Common myeloid progenitor, CD34-positive (primary cell): ENCODE measurements at regions of chr16 and their contacts with region 1.

Region 1: GRCh38 chr16:68022704-68023522 is at the starts of genes DDX28 and DUS2:
- DNase-seq: peak; percentile 94 to 97 (median 97)
- H3K4me3 ChIP-seq: peak within 1 kb of the TSS; percentile 93 to 98 (median 95)
- H3K27ac ChIP-seq: peak within 1 kb of the TSS; percentile 82 to 92
- H3K4me1 ChIP-seq: peaks cover 7 to 29% (median 23%) of the 10 kb centered on the region in 4 experiments
- H3K27me3 ChIP-seq: no peaks in the 10 kb centered on the region

Region 2: DNA sequence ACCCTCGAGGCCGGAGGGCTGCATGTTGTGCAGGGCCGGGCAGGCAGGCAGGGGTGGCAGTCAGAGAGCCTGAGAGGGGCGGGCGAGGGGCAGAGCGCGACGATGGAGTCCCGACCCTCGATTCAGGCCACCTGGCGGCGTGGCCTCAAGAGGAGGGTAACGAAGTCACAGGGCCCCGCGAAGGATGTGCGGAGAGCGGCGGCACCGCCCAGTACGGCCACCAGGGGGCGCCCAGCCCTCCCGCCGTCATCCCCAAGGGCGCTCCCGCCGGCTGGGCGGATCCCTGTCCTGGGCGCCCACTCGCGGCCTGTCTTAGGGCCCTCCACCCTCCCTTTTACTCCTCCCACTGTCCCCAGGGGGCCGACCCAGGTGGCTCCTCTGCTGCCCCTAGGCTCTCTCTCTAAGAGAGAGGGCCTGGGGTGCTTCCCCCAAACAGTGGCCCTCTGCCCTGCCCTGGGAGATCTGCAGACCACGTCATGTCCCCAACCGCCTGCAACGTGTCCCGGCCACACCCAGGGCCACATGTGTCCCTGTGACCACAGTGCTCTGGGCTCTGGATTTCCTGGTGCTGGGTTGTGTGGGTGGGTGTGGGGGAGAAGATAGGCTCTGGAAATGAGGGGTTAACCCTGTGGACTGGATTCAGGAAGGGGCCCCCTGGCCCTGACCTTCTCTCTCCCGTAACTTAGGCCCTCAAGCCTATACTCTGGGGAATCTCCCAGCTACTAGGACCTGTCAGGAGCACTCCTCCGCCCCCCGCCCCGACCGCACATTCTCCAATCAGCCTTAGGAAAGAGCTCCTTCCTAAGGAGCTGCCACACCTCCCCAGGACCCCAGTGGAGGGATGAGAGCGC is 29.5 kb before region 1 on chr16:
- CTCF ChIA-PET with region 1: interaction called, 19 read pairs
- POLR2A ChIA-PET with region 1: interaction called, 14 read pairs
- DNase-seq: peak; percentile 85 to 91 (median 88)
- H3K4me3 ChIP-seq: peak overlapping the region in 5 of 7 experiments; percentile 38 to 67 (median 57)
- H3K27ac ChIP-seq: peak overlapping the region in 1 of 2 experiments; percentile 81
- H3K4me1 ChIP-seq: peaks cover 0 to 34% (median 32%) of the 10 kb centered on the region in 4 experiments
- H3K27me3 ChIP-seq: no peaks in the 10 kb centered on the region

Region 3: GRCh38 chr16:68055395-68055794 is 32.5 kb after region 1 on chr16:
- CTCF ChIA-PET with region 1: no interaction called
- POLR2A ChIA-PET with region 1: no interaction called
- DNase-seq: no peak
- H3K4me3 ChIP-seq: no peak overlapping the region
- H3K27ac ChIP-seq: no peak overlapping the region
- H3K4me1 ChIP-seq: no peaks in the 10 kb centered on the region
- H3K27me3 ChIP-seq: no peaks in the 10 kb centered on the region